CD4-positive, alpha-beta memory T cell (primary cell): ENCODE measurements at regions of chr17 and their contacts with region 1.

Region 1: GRCh38 chr17:7687908-7688807 is at the start of gene WRAP53:
- DNase-seq: peak; percentile 95 to 97 (median 96)
- H3K4me3 ChIP-seq: peak within 1 kb of the TSS; percentile 100
- H3K4me3 Mint-ChIP-seq: peak within 1 kb of the TSS; percentile 93 to 98 (median 96)
- H3K27ac ChIP-seq: peak within 1 kb of the TSS; percentile 99
- H3K27ac Mint-ChIP-seq: peak within 1 kb of the TSS; percentile 98 to 100 (median 99)
- H3K4me1 ChIP-seq: peaks cover 40% of the 10 kb centered on the region
- H3K4me1 Mint-ChIP-seq: peaks cover 18 to 53% (median 40%) of the 10 kb centered on the region in 4 donors
- H3K27me3 ChIP-seq: no peaks in the 10 kb centered on the region
- H3K27me3 Mint-ChIP-seq: no peaks in the 10 kb centered on the region
- total RNA-seq, gene WRAP53: 11.9 to 12.5 TPM

Region 2: DNA sequence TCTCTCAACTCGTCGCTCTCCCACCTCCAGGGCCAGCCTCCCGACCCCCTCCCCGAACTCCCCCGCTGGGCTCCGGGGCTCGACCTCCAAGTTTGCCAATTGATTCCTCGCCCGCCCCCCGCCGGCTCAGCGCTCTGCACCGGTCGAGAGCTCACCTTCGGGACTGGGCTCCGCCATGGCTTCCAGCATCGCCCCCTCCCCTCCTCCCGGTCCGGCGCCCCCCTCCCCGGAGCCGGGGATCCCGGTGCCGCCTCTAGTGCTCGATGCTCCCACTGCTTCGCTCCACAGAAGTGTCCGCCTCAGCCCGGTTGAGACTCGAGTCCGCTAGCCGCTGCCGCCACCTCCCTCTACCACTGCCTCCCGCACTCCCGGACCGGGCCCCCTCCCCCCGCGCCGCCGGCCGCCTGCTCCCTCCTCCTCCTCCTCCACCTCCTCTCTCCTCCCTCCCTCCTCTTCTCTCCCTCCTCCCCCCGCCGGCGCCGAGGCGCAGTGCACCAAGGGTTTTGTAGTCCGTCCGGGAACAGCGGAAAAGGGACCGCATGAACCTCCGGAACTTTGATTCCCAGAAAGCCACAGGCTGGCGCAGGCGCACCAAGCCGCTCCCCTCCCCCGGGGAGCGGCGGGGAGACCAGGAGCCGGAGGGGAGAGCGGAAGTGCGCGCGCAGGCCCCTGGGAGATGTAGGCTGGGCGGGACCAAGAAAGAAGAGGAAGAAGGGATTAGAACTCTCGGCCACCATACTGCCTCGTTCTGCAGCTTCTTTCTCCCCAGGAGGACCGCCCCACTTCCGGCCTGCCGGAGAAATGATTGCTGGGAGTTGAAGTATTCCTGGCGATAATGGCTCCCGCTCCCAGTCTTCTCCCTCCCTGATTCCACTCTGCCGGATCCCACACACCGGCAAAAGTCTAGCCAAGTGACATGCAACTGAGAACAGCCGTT is 448.8 kb before region 1 on chr17 and contains the start of gene PHF23:
- CTCF ChIA-PET with region 1: no interaction called
- POLR2A ChIA-PET with region 1: interaction called, 24 read pairs
- intact Hi-C with region 1: no loop called
- DNase-seq: peak; percentile 97 to 98 (median 98)
- H3K4me3 ChIP-seq: peak within 1 kb of the TSS; percentile 85 to 86
- H3K4me3 Mint-ChIP-seq: peak within 1 kb of the TSS; percentile 94 to 99 (median 96)
- H3K27ac ChIP-seq: peak within 1 kb of the TSS; percentile 85
- H3K27ac Mint-ChIP-seq: peak within 1 kb of the TSS; percentile 90 to 100 (median 98)
- H3K4me1 ChIP-seq: peaks cover 61% of the 10 kb centered on the region
- H3K4me1 Mint-ChIP-seq: peaks cover 41 to 75% (median 54%) of the 10 kb centered on the region in 4 donors
- H3K27me3 ChIP-seq: no peaks in the 10 kb centered on the region
- H3K27me3 Mint-ChIP-seq: peaks cover 0 to 2% of the 10 kb centered on the region in 2 donors
- total RNA-seq, gene PHF23: 45.8 to 55.8 TPM

Region 3: GRCh38 chr17:7351665-7352501 is 336.3 kb before region 1 on chr17 and contains the start of gene KCTD11:
- CTCF ChIA-PET with region 1: interaction called, 15 read pairs
- POLR2A ChIA-PET with region 1: interaction called, 6 read pairs
- intact Hi-C with region 1: loop called (anchors 5 kb)
- DNase-seq: peak; percentile 64 to 88 (median 68)
- H3K4me3 ChIP-seq: peak within 1 kb of the TSS; percentile 29 to 49
- H3K4me3 Mint-ChIP-seq: peak within 1 kb of the TSS; percentile 80 to 95 (median 84)
- H3K27ac ChIP-seq: peak within 1 kb of the TSS; percentile 68
- H3K27ac Mint-ChIP-seq: peak within 1 kb of the TSS; percentile 62 to 95 (median 87)
- H3K4me1 ChIP-seq: peaks cover 44% of the 10 kb centered on the region
- H3K4me1 Mint-ChIP-seq: peaks cover 21 to 61% (median 40%) of the 10 kb centered on the region in 4 donors
- H3K27me3 ChIP-seq: no peaks in the 10 kb centered on the region
- H3K27me3 Mint-ChIP-seq: no peaks in the 10 kb centered on the region
- total RNA-seq, gene KCTD11: 3.5 to 4.3 TPM

Region 4: DNA sequence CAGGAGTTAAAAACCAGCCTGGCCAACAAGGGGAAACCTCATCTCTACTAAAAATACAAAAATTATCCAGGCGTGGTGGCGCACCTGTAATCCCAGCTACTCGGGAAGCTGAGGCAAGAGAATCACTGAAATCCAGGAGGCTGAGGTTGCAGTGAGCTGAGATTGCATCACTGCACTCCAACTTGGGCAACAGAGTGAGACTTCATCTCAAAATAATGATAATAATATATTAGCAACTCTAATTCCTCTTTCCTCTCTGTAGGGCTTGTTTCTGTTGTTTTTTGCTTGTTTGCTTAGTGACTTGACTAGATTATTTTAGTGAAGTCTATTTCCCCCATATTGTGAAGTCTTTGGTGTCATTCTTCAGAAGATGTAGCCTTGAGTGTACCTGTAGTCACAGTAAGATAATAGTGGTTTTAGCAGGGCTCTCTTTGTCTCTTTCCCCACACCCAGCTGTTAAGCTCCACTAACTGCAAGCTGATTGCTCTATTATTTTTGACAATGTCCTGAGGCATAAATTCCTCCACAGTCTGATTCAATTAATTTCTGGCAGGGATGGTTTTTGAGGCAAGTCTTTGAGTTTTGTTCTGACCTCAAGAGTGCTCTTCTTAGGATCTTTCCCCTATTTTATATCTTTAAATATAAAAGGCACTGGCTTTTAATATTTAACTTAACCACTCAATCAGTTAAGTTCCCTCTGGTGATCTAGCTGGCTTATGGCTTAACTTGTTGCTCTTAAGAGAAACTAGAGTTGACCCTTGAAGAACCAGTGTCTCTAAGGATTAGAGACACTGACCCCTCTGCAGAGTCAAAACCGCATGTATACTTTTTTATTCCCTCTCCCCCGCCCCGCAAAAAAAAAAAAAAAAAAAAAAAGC is 157.9 kb before region 1 on chr17:
- CTCF ChIA-PET with region 1: no interaction called
- POLR2A ChIA-PET with region 1: no interaction called
- intact Hi-C with region 1: no loop called
- DNase-seq: no peak
- H3K4me3 ChIP-seq: no peak overlapping the region
- H3K4me3 Mint-ChIP-seq: no peak overlapping the region
- H3K27ac ChIP-seq: no peak overlapping the region
- H3K27ac Mint-ChIP-seq: no peak overlapping the region
- H3K4me1 ChIP-seq: no peaks in the 10 kb centered on the region
- H3K4me1 Mint-ChIP-seq: no peaks in the 10 kb centered on the region
- H3K27me3 ChIP-seq: no peaks in the 10 kb centered on the region
- H3K27me3 Mint-ChIP-seq: no peaks in the 10 kb centered on the region

Region 5: DNA sequence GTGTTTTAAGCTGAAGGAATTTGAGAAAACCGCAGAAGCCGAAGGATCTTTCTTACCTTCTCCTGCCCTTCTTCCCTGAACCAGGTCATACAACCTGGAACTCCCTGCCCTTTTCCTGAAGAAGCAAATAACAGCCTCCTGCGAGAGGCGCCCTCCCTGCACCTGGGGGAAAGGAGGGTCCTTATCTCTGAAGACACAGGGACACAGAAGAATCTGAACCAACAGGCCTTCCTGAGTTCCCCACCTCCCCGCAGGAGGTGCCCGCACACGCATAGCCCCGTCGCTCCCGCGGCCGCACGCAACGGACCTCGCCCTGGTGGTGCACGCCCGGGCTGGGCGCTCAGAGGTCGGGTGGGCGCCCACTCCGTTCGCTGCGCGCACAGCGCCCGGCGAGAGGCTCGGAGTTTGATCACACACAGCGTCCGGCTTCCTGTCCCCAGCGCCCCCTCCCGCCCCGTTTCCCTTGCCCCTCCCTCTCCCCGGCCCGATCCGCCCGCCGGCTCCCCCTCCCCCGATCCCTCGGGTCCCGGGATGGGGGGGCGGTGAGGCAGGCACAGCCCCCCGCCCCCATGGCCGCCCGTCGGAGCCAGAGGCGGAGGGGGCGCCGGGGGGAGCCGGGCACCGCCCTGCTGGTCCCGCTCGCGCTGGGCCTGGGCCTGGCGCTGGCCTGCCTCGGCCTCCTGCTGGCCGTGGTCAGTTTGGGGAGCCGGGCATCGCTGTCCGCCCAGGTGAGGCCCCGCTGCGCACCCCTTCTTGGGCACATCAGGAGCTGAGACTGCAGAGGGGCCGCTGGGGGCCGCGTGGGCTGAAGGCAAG is 139.4 kb before region 1 on chr17 and contains the start of gene TNFSF12:
- CTCF ChIA-PET with region 1: no interaction called
- POLR2A ChIA-PET with region 1: interaction called, 19 read pairs
- intact Hi-C with region 1: no loop called
- DNase-seq: peak; percentile 38 to 64 (median 42)
- H3K4me3 ChIP-seq: peak within 1 kb of the TSS; percentile 72 to 82
- H3K4me3 Mint-ChIP-seq: peak within 1 kb of the TSS; percentile 88 to 96 (median 92)
- H3K27ac ChIP-seq: peak within 1 kb of the TSS; percentile 79
- H3K27ac Mint-ChIP-seq: peak within 1 kb of the TSS; percentile 81 to 96 (median 94)
- H3K4me1 ChIP-seq: peaks cover 37% of the 10 kb centered on the region
- H3K4me1 Mint-ChIP-seq: peaks cover 30 to 52% (median 43%) of the 10 kb centered on the region in 4 donors
- H3K27me3 ChIP-seq: no peaks in the 10 kb centered on the region
- H3K27me3 Mint-ChIP-seq: no peaks in the 10 kb centered on the region
- total RNA-seq, gene TNFSF12: 45.1 to 52.2 TPM

Region 6: DNA sequence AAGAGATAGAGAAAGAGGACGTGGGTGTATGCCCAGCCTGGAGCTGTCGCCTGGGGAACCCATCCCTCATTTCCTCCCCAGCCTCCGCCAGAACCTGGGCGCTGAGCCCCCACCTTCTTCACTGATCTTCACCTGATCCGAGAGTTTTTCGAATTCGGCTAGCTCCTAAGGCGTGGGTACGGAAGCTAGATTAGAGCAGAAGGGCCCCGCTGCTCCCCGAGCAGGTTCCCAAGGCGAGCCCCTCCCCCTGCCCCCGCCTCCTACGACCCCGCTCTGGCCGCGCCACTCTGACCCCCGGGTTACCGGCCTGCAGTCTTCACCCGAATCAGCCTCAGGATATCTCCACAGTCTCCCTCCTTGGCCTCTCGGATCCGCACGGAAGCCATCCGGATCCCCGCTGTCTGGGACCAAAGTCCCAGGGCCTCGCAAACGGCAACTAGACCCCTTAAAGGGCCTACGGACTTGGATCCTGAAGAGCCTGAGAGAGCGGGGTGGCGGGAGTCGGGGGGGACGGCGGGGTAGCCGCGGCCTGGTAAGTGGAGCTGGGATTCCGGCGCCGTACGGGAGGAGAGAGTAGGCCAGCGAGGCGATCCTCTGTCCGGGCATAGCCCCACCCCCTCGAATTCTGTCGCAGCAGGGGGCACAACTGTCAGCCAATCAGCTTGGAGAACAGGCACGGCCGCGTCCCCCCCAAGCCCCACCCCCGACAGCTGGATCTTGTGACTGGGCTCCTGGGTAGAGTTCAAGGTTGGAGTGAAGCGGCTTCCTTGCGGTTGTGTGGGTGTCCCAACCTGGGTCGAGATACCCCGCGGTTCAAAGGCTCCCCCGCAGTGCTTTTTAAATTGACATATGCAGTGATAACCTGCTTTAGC is 60.7 kb before region 1 on chr17 and contains the start of gene SAT2:
- CTCF ChIA-PET with region 1: interaction called, 56 read pairs
- POLR2A ChIA-PET with region 1: interaction called, 84 read pairs
- intact Hi-C with region 1: loop called (anchors 1 kb)
- DNase-seq: peak; percentile 73 to 88 (median 75)
- H3K4me3 ChIP-seq: peak within 1 kb of the TSS; percentile 76 to 82
- H3K4me3 Mint-ChIP-seq: peak within 1 kb of the TSS; percentile 91 to 95 (median 93)
- H3K27ac ChIP-seq: peak within 1 kb of the TSS; percentile 82
- H3K27ac Mint-ChIP-seq: peak within 1 kb of the TSS; percentile 75 to 96 (median 91)
- H3K4me1 ChIP-seq: peaks cover 13% of the 10 kb centered on the region
- H3K4me1 Mint-ChIP-seq: peaks cover 4 to 20% (median 14%) of the 10 kb centered on the region in 4 donors
- H3K27me3 ChIP-seq: no peaks in the 10 kb centered on the region
- H3K27me3 Mint-ChIP-seq: no peaks in the 10 kb centered on the region
- total RNA-seq, gene SAT2: 65.8 to 76.9 TPM

Region 7: GRCh38 chr17:7844292-7845154 is 156.4 kb after region 1 on chr17:
- CTCF ChIA-PET with region 1: no interaction called
- POLR2A ChIA-PET with region 1: interaction called, 14 read pairs
- intact Hi-C with region 1: loop called (anchors 5 kb)
- DNase-seq: peak; percentile 82 to 87 (median 85)
- H3K4me3 ChIP-seq: peak overlapping the region; percentile 57 to 92
- H3K4me3 Mint-ChIP-seq: peak overlapping the region; percentile 92 to 99 (median 97)
- H3K27ac ChIP-seq: peak overlapping the region; percentile 99
- H3K27ac Mint-ChIP-seq: peak overlapping the region; percentile 99 to 100 (median 100)
- H3K4me1 ChIP-seq: peaks cover 30% of the 10 kb centered on the region
- H3K4me1 Mint-ChIP-seq: peaks cover 21 to 50% (median 35%) of the 10 kb centered on the region in 4 donors
- H3K27me3 ChIP-seq: no peaks in the 10 kb centered on the region
- H3K27me3 Mint-ChIP-seq: peaks cover 0 to 3% of the 10 kb centered on the region in 2 donors